ENCODE measurements at regions of chr2 and their contacts with region 1.

Region 1: DNA sequence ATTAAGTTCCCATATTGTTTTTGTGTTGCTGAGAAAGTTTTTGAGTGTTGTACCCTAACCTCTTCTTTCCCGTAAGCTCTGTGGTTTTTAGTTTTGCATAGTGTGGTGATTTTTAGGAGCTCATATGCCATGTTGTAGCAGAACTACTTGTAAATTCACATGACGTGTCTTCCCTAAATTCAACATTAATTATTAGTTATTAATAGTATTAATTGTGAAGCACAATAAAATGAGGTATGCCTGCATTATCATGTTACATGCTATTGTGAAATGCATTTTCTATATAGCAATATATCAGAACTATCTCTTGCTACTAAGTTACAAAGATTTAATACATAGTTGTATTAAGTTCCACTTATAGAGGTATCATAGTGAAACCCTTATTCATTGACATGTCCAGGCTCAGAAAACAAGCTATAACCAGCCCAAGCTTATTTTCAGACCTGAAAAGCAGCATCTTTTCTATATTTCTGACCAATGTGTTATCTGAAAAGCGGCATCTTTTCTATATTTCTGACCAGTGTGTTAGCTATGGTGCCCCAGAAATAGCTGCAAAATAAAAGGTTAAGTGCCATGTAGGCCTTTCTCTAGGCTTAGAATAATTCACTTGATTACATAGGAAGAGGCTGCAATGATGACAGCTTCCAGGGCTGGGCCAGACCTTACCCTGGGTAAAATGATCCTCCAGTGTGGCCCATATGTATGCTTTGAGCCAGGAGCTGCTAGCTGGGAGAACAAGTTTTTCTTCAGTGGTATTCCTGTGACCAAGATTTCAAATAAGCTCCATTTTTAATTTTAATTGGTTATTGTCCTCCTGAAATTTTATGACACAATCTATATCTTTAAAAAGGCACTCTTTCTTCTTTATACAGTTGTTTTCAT is 21.6 kb downstream of the EPAS1 start:
- DNase-seq: no peak
- H3K4me3 ChIP-seq: no peak overlapping the region
- H3K27ac ChIP-seq: no peak overlapping the region
- H3K27me3 ChIP-seq: no peaks in the 10 kb centered on the region
- CTCF ChIP-seq: no peak

Region 2: GRCh38 chr2:46010925-46011490 is 307.8 kb before region 1 on chr2:
- CTCF ChIA-PET with region 1: interaction called, 11 read pairs
- POLR2A ChIA-PET with region 1: no interaction called
- DNase-seq: no peak
- H3K4me3 ChIP-seq: no peak overlapping the region
- H3K27ac ChIP-seq: no peak overlapping the region
- H3K27me3 ChIP-seq: no peaks in the 10 kb centered on the region
- CTCF ChIP-seq: peak; percentile 64

Region 3: GRCh38 chr2:46351750-46352138 is 32.9 kb after region 1 on chr2:
- CTCF ChIA-PET with region 1: no interaction called
- POLR2A ChIA-PET with region 1: no interaction called
- DNase-seq: no peak
- H3K4me3 ChIP-seq: no peak overlapping the region
- H3K27ac ChIP-seq: no peak overlapping the region
- H3K27me3 ChIP-seq: no peaks in the 10 kb centered on the region
- CTCF ChIP-seq: no peak